Activated B cell treated with CpG ODN at 0.5 μM for 24 hours (primary cell): ENCODE measurements at regions of chrX and their contacts with region 1.

Region 1: DNA sequence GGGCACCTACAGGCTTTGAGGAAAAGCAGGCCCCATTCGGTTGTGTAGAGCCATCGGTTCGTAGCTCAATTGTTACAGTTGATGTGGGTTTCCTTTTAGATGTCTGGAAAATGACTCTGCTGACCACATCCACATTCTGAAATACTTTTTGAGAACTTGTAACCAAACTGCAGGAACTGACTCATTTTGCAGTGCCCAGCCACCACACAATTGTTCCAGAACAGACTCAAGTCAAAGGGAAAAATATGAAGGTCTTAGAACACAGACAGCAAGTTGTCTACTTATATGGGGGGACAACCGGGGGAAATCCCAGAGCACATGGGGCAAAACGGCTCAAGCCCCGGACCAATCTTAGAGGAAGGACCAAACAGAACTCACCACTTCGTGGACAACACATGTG is 557.6 kb upstream of the DIPK2B start:
- DNase-seq: no peak
- ATAC-seq: peak; percentile 19
- H3K4me3 Mint-ChIP-seq: peak overlapping the region; percentile 85
- H3K27ac Mint-ChIP-seq: peak overlapping the region; percentile 97
- H3K4me1 Mint-ChIP-seq: peaks cover 75% of the 10 kb centered on the region
- H3K27me3 Mint-ChIP-seq: no peaks in the 10 kb centered on the region
- CTCF ChIP-seq: no peak

Region 2: GRCh38 chrX:45710081-45710801 is 48.1 kb before region 1 on chrX:
- CTCF ChIA-PET with region 1: no interaction called
- POLR2A ChIA-PET with region 1: interaction called, 4 read pairs
- intact Hi-C with region 1: loop called (anchors 1 kb)
- DNase-seq: no peak
- ATAC-seq: peak; percentile 88
- H3K4me3 Mint-ChIP-seq: peak overlapping the region; percentile 38
- H3K27ac Mint-ChIP-seq: peak overlapping the region; percentile 62
- H3K4me1 Mint-ChIP-seq: peaks cover 30% of the 10 kb centered on the region
- H3K27me3 Mint-ChIP-seq: no peaks in the 10 kb centered on the region
- CTCF ChIP-seq: no peak

Region 3: GRCh38 chrX:45769761-45770582 is 11.7 kb after region 1 on chrX:
- CTCF ChIA-PET with region 1: no interaction called
- POLR2A ChIA-PET with region 1: interaction called, 85 read pairs
- intact Hi-C with region 1: loop called (anchors 1 kb)
- DNase-seq: peak; percentile 28
- ATAC-seq: peak; percentile 76
- H3K4me3 Mint-ChIP-seq: peak overlapping the region; percentile 90
- H3K27ac Mint-ChIP-seq: peak overlapping the region; percentile 91
- H3K4me1 Mint-ChIP-seq: peaks cover 52% of the 10 kb centered on the region
- H3K27me3 Mint-ChIP-seq: no peaks in the 10 kb centered on the region
- CTCF ChIP-seq: no peak

Region 4: GRCh38 chrX:45801554-45801953 is 43.2 kb after region 1 on chrX:
- CTCF ChIA-PET with region 1: interaction called, 3 read pairs
- POLR2A ChIA-PET with region 1: interaction called, 3 read pairs
- intact Hi-C with region 1: loop called (anchors 10 kb)
- DNase-seq: no peak
- ATAC-seq: peak; percentile 50
- H3K4me3 Mint-ChIP-seq: no peak overlapping the region
- H3K27ac Mint-ChIP-seq: no peak overlapping the region
- H3K4me1 Mint-ChIP-seq: peaks cover 13% of the 10 kb centered on the region
- H3K27me3 Mint-ChIP-seq: no peaks in the 10 kb centered on the region
- CTCF ChIP-seq: no peak

Region 5: GRCh38 chrX:45900766-45901615 is 142.7 kb after region 1 on chrX:
- CTCF ChIA-PET with region 1: no interaction called
- POLR2A ChIA-PET with region 1: no interaction called
- intact Hi-C with region 1: no loop called
- DNase-seq: no peak
- ATAC-seq: no peak
- H3K4me3 Mint-ChIP-seq: no peak overlapping the region
- H3K27ac Mint-ChIP-seq: no peak overlapping the region
- H3K4me1 Mint-ChIP-seq: no peaks in the 10 kb centered on the region
- H3K27me3 Mint-ChIP-seq: peaks cover 2% of the 10 kb centered on the region
- CTCF ChIP-seq: no peak

Region 6: DNA sequence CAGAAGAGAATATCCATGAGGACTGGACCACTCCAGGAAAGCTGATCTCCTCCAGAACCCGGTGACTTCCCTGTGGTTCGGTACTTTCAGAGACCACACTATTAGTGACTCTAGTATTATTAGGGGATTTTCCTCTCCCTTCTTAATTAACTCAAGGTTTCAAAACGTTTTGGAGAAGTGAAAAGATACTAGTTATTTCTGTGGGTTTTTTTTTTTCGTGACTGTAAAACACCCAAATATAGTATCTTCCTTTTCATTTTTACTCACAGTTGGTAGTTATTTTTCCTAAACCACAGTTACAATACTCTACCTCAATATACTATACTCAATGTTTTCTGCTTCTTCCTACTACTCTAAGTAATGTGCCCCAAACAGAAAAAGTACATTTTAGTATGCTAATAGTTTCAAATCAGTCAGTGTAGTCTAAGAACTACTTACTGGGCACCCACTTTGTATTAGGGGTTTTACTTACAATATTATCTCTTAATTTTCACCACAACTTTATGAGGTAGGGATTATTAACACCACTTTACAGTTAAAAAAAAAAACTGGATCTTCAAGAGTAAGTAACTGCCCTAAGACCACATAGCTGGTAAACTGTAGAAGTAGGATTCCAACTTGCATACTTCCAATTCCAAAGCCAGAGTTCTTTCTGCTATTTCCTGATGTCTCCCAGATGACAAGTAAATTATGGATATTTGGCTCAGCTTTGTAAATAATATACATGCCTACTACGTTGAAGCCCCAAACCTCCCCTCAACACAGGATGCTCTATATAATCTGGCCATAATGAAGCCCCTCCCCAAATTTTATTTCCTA is 955.6 kb after region 1 on chrX:
- CTCF ChIA-PET with region 1: no interaction called
- POLR2A ChIA-PET with region 1: no interaction called
- intact Hi-C with region 1: loop called (anchors 10 kb)
- DNase-seq: no peak
- ATAC-seq: peak; percentile 60
- H3K4me3 Mint-ChIP-seq: peak overlapping the region; percentile 58
- H3K27ac Mint-ChIP-seq: peak overlapping the region; percentile 86
- H3K4me1 Mint-ChIP-seq: peaks cover 89% of the 10 kb centered on the region
- H3K27me3 Mint-ChIP-seq: no peaks in the 10 kb centered on the region
- CTCF ChIP-seq: no peak

Region 7: GRCh38 chrX:46967547-46967946 is 1209.2 kb after region 1 on chrX:
- CTCF ChIA-PET with region 1: no interaction called
- POLR2A ChIA-PET with region 1: no interaction called
- intact Hi-C with region 1: loop called (anchors 10 kb)
- DNase-seq: no peak
- ATAC-seq: peak; percentile 54
- H3K4me3 Mint-ChIP-seq: peak overlapping the region; percentile 70
- H3K27ac Mint-ChIP-seq: peak overlapping the region; percentile 93
- H3K4me1 Mint-ChIP-seq: peaks cover 82% of the 10 kb centered on the region
- H3K27me3 Mint-ChIP-seq: no peaks in the 10 kb centered on the region
- CTCF ChIP-seq: no peak